ENCODE measurements at regions of chr10 and their contacts with region 1.

Region 1: GRCh38 chr10:73848821-73849489 is 25.4 kb downstream of the CAMK2G start:
- DNase-seq: peak; percentile 82 to 93 (median 88)
- ATAC-seq: peak; percentile 100
- H3K4me3 ChIP-seq: no peak overlapping the region
- H3K4me3 Mint-ChIP-seq: peak overlapping the region in 5 of 10 donors; percentile 1 to 58 (median 37)
- H3K27ac ChIP-seq: peak overlapping the region; percentile 56
- H3K27ac Mint-ChIP-seq: peak overlapping the region; percentile 75 to 97 (median 94)
- H3K4me1 ChIP-seq: peaks cover 6 to 7% of the 10 kb centered on the region in 2 donors
- H3K4me1 Mint-ChIP-seq: peaks cover 11 to 23% (median 16%) of the 10 kb centered on the region in 7 donors
- H3K27me3 ChIP-seq: no peaks in the 10 kb centered on the region
- H3K27me3 Mint-ChIP-seq: no peaks in the 10 kb centered on the region

Region 2: DNA sequence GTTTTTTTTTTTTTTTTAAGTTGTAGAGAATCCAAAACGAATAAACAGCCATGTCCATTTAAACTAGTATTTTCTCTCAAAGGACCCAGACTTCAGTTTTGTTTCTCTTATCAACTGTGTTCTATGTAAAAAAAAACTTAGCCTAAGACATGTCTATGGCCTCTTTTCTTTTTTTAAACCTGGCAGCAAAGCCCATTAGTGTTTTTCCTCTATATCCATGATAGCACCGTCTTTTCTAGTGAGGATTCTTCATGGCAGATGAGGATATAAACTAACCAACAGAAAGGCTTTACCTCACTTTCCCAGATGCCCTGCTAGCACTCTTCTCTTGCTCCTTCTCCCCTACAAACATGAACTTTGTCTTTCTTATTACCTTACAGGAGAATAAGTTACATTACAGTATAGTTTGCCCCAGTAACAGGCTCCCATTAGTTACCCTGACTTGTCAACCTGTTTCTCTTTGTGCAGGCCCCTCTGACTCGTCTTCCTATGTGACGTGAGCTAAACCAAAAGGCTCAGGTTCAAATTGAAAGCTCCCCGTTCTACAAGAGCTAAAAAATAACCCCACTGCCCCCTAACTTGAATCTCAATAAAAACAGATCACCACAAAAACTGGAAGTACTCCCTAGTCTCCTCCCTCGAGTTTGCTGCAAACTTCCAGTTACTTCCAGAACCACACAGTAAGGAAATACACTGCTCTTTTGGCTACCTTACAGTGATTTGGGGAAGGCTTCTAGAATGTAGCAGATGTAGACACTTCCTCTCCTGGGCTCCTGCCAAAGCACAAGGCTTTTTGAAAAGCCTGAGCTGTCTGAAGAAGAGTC is 772.4 kb before region 1 on chr10:
- CTCF ChIA-PET with region 1: no interaction called
- POLR2A ChIA-PET with region 1: no interaction called
- intact Hi-C with region 1: no loop called
- DNase-seq: no peak
- ATAC-seq: no peak
- H3K4me3 ChIP-seq: no peak overlapping the region
- H3K4me3 Mint-ChIP-seq: peak overlapping the region in 1 of 10 donors; percentile 55
- H3K27ac ChIP-seq: no peak overlapping the region
- H3K27ac Mint-ChIP-seq: peak overlapping the region in 5 of 9 donors; percentile 11 to 91 (median 55)
- H3K4me1 ChIP-seq: no peaks in the 10 kb centered on the region
- H3K4me1 Mint-ChIP-seq: peaks cover 5 to 33% (median 8%) of the 10 kb centered on the region in 7 donors
- H3K27me3 ChIP-seq: no peaks in the 10 kb centered on the region
- H3K27me3 Mint-ChIP-seq: no peaks in the 10 kb centered on the region

Region 3: GRCh38 chr10:73865459-73866442 is 16.8 kb after region 1 on chr10:
- CTCF ChIA-PET with region 1: interaction called, 16 read pairs
- POLR2A ChIA-PET with region 1: interaction called, 4 read pairs
- intact Hi-C with region 1: loop called (anchors 1 kb)
- DNase-seq: peak; percentile 18 to 50 (median 47)
- ATAC-seq: peak; percentile 90
- H3K4me3 ChIP-seq: peak overlapping the region; percentile 60
- H3K4me3 Mint-ChIP-seq: peak overlapping the region; percentile 79 to 92 (median 87)
- H3K27ac ChIP-seq: peak overlapping the region; percentile 67
- H3K27ac Mint-ChIP-seq: peak overlapping the region; percentile 88 to 97 (median 96)
- H3K4me1 ChIP-seq: peaks cover 28 to 72% of the 10 kb centered on the region in 2 donors
- H3K4me1 Mint-ChIP-seq: peaks cover 56 to 92% (median 88%) of the 10 kb centered on the region in 7 donors
- H3K27me3 ChIP-seq: no peaks in the 10 kb centered on the region
- H3K27me3 Mint-ChIP-seq: no peaks in the 10 kb centered on the region

Region 4: GRCh38 chr10:73874267-73875138 is 25.5 kb after region 1 on chr10 and contains the start of gene CAMK2G:
- CTCF ChIA-PET with region 1: interaction called, 288 read pairs
- POLR2A ChIA-PET with region 1: interaction called, 327 read pairs
- intact Hi-C with region 1: loop called (anchors 1 kb)
- DNase-seq: peak; percentile 68 to 86 (median 83)
- ATAC-seq: peak; percentile 91
- H3K4me3 ChIP-seq: peak within 1 kb of the TSS; percentile 94
- H3K4me3 Mint-ChIP-seq: peak within 1 kb of the TSS; percentile 83 to 96 (median 90)
- H3K27ac ChIP-seq: peak within 1 kb of the TSS; percentile 86
- H3K27ac Mint-ChIP-seq: peak within 1 kb of the TSS; percentile 81 to 97 (median 94)
- H3K4me1 ChIP-seq: peaks cover 30 to 48% of the 10 kb centered on the region in 2 donors
- H3K4me1 Mint-ChIP-seq: peaks cover 41 to 84% (median 74%) of the 10 kb centered on the region in 7 donors
- H3K27me3 ChIP-seq: no peaks in the 10 kb centered on the region
- H3K27me3 Mint-ChIP-seq: peaks cover 0 to 2% (median 0%) of the 10 kb centered on the region in 5 donors
- total RNA-seq, gene CAMK2G: 44.6 to 70.9 (median 61.9) TPM

Region 5: DNA sequence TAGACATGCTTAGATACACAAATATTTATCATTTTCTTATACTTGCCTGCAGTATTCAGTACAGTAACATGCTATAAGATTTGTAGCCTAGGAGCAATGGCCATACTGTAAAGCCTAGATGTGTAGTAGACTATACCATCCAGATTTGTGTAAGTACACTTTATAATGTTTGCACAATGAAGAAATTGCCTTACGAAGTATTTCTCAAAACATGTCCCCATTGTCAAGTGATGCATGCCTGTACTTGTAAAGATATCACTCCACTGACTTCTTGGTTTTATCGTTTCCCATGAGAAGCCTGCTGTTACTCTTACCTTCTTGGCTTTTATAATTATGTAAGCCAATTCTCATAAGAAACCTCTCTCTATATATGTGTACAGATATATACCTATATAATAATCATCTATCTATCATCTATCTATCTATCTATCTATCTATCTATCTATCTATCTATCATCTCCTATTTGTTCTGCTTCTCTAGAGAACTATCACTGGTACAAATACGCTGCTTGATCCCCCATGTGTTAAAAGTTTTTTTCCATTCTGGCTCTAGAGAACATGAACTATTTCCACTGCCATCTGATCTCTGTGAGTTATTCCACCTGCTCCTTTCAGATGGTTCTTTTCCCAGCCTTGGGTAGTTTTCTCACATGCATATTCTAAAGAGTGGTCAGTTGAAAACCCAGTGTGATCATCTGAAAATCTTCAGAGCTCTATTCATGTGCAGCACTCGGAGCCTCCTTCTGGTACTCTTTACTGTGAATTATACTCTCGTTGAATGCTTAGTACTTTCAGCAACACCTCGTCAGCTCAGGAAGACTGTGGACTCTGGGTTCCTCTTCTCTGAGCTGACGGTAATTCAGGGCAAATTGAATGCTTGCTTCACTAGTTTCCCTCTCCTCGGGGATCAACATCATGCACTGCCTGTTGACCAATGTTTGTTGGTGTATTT is 134.4 kb after region 1 on chr10:
- CTCF ChIA-PET with region 1: no interaction called
- POLR2A ChIA-PET with region 1: no interaction called
- intact Hi-C with region 1: no loop called
- DNase-seq: no peak
- ATAC-seq: peak; percentile 31
- H3K4me3 ChIP-seq: no peak overlapping the region
- H3K4me3 Mint-ChIP-seq: no peak overlapping the region
- H3K27ac ChIP-seq: no peak overlapping the region
- H3K27ac Mint-ChIP-seq: peak overlapping the region in 2 of 9 donors; percentile 2 to 16
- H3K4me1 ChIP-seq: no peaks in the 10 kb centered on the region
- H3K4me1 Mint-ChIP-seq: peaks cover 5 to 19% (median 14%) of the 10 kb centered on the region in 7 donors
- H3K27me3 ChIP-seq: no peaks in the 10 kb centered on the region
- H3K27me3 Mint-ChIP-seq: peaks cover 0 to 46% (median 0%) of the 10 kb centered on the region in 5 donors

Region 6: DNA sequence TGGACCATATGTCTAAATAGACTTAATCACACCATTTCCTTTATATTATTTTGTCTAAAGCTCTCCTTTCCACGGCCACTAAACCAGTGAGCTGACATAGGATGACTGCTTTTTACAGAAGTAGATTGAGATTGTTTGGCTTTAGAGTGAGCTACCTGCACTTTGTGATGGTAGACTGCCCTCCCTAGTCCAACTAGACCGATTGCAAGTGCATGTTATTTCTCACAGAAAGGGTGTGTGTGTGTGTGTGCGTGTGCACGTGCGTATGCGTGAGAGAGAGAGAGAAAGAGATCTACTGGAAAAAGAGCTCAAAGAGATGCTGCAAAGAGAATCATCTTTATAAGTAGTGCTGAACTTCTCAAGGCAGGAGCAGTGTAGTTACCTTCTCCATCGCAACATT is 209.7 kb after region 1 on chr10:
- CTCF ChIA-PET with region 1: no interaction called
- POLR2A ChIA-PET with region 1: no interaction called
- intact Hi-C with region 1: loop called in 1 of 2 experiments (anchors 5 kb)
- DNase-seq: peak in 7 of 9 donors; percentile 12 to 60 (median 29)
- ATAC-seq: peak; percentile 70
- H3K4me3 ChIP-seq: no peak overlapping the region
- H3K4me3 Mint-ChIP-seq: peak overlapping the region in 7 of 10 donors; percentile 1 to 76 (median 8)
- H3K27ac ChIP-seq: no peak overlapping the region
- H3K27ac Mint-ChIP-seq: peak overlapping the region in 5 of 9 donors; percentile 4 to 52 (median 12)
- H3K4me1 ChIP-seq: peaks cover 10 to 15% of the 10 kb centered on the region in 2 donors
- H3K4me1 Mint-ChIP-seq: peaks cover 18 to 44% (median 26%) of the 10 kb centered on the region in 7 donors
- H3K27me3 ChIP-seq: no peaks in the 10 kb centered on the region
- H3K27me3 Mint-ChIP-seq: no peaks in the 10 kb centered on the region

Region 7: GRCh38 chr10:74460812-74461211 is 611.9 kb after region 1 on chr10:
- CTCF ChIA-PET with region 1: no interaction called
- POLR2A ChIA-PET with region 1: no interaction called
- intact Hi-C with region 1: no loop called
- DNase-seq: no peak
- ATAC-seq: no peak
- H3K4me3 ChIP-seq: no peak overlapping the region
- H3K4me3 Mint-ChIP-seq: no peak overlapping the region
- H3K27ac ChIP-seq: no peak overlapping the region
- H3K27ac Mint-ChIP-seq: no peak overlapping the region
- H3K4me1 ChIP-seq: no peaks in the 10 kb centered on the region
- H3K4me1 Mint-ChIP-seq: peaks cover 0 to 4% (median 2%) of the 10 kb centered on the region in 7 donors
- H3K27me3 ChIP-seq: no peaks in the 10 kb centered on the region
- H3K27me3 Mint-ChIP-seq: no peaks in the 10 kb centered on the region

Measured in naive thymus-derived CD4-positive, alpha-beta T cell (primary cell).